ENCODE measurements at regions of chr11 and their contacts with region 1.

Region 1: GRCh38 chr11:33257897-33258630 is 883 bp downstream of the HIPK3 start:
- DNase-seq: peak; percentile 67 to 83 (median 76)
- ATAC-seq: peak; percentile 71
- H3K4me3 ChIP-seq: peak overlapping the region; percentile 63
- H3K4me3 Mint-ChIP-seq: peak overlapping the region; percentile 89 to 99 (median 96)
- H3K27ac ChIP-seq: peak overlapping the region; percentile 97
- H3K27ac Mint-ChIP-seq: peak overlapping the region; percentile 93 to 99 (median 98)
- H3K4me1 ChIP-seq: peaks cover 27 to 28% of the 10 kb centered on the region in 2 donors
- H3K4me1 Mint-ChIP-seq: peaks cover 25 to 55% (median 44%) of the 10 kb centered on the region in 7 donors
- H3K27me3 ChIP-seq: no peaks in the 10 kb centered on the region
- H3K27me3 Mint-ChIP-seq: peaks cover 0 to 2% (median 0%) of the 10 kb centered on the region in 5 donors

Region 2: GRCh38 chr11:32583459-32584271 is 674.4 kb before region 1 on chr11 and contains the start of gene EIF3M:
- CTCF ChIA-PET with region 1: no interaction called
- POLR2A ChIA-PET with region 1: no interaction called
- intact Hi-C with region 1: loop called (anchors 1 to 5 kb)
- DNase-seq: peak; percentile 90 to 95 (median 94)
- ATAC-seq: peak; percentile 100
- H3K4me3 ChIP-seq: peak within 1 kb of the TSS; percentile 87
- H3K4me3 Mint-ChIP-seq: peak within 1 kb of the TSS; percentile 93 to 99 (median 97)
- H3K27ac ChIP-seq: peak within 1 kb of the TSS; percentile 96
- H3K27ac Mint-ChIP-seq: peak within 1 kb of the TSS; percentile 94 to 99 (median 97)
- H3K4me1 ChIP-seq: peaks cover 27 to 28% of the 10 kb centered on the region in 2 donors
- H3K4me1 Mint-ChIP-seq: peaks cover 25 to 52% (median 44%) of the 10 kb centered on the region in 7 donors
- H3K27me3 ChIP-seq: no peaks in the 10 kb centered on the region
- H3K27me3 Mint-ChIP-seq: no peaks in the 10 kb centered on the region
- total RNA-seq, gene EIF3M: 210 to 250 (median 236) TPM

Region 3: DNA sequence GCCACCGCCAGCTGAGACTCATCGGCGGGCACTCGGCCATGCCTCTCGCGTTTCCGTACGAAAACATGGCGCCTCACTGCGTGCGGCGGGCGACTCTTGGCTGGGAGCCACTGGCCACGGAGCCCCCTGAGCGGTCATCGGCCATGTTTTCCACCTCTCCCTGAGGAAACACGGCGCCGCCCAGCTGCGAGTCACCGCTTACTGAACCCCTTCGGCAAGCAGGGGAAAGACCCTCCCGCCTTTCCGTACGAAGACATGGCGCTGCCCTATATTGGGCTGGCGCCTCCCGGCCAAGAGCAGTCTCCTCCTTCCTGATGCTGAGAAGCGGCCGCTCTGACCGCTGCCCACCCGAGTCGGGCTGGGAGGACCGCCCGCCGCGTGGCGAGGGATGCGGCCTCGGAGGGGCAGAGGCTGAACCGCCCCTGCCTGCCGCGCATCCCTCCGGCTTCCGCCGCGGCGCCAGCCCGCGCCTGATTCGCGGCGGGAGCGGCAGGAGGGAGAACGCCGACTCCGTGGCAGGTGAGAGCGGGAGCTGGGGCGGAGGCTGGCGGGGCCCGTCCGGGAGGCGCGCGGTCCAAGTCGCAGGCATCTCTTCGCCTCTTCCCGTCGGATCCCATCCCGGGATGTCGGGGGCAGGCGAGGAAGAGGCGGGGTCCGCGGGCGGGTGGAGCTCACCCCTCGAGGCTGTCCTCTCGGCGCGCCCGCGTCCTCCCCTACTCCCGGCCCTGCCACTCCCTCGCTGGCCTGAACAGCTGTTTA is 218.6 kb before region 1 on chr11 and contains the start of gene TCP11L1:
- CTCF ChIA-PET with region 1: no interaction called
- POLR2A ChIA-PET with region 1: interaction called, 3 read pairs
- intact Hi-C with region 1: loop called (anchors 2 to 5 kb)
- DNase-seq: peak; percentile 57 to 88 (median 76)
- ATAC-seq: peak; percentile 93
- H3K4me3 ChIP-seq: peak within 1 kb of the TSS; percentile 100
- H3K4me3 Mint-ChIP-seq: peak within 1 kb of the TSS; percentile 91 to 97 (median 94)
- H3K27ac ChIP-seq: peak within 1 kb of the TSS; percentile 82
- H3K27ac Mint-ChIP-seq: peak within 1 kb of the TSS; percentile 77 to 95 (median 92)
- H3K4me1 ChIP-seq: peaks cover 3 to 9% of the 10 kb centered on the region in 2 donors
- H3K4me1 Mint-ChIP-seq: peaks cover 0 to 17% (median 14%) of the 10 kb centered on the region in 7 donors
- H3K27me3 ChIP-seq: no peaks in the 10 kb centered on the region
- H3K27me3 Mint-ChIP-seq: peaks cover 0 to 17% (median 0%) of the 10 kb centered on the region in 5 donors
- total RNA-seq, gene TCP11L1: 9.1 to 17.1 (median 13.3) TPM

Region 4: DNA sequence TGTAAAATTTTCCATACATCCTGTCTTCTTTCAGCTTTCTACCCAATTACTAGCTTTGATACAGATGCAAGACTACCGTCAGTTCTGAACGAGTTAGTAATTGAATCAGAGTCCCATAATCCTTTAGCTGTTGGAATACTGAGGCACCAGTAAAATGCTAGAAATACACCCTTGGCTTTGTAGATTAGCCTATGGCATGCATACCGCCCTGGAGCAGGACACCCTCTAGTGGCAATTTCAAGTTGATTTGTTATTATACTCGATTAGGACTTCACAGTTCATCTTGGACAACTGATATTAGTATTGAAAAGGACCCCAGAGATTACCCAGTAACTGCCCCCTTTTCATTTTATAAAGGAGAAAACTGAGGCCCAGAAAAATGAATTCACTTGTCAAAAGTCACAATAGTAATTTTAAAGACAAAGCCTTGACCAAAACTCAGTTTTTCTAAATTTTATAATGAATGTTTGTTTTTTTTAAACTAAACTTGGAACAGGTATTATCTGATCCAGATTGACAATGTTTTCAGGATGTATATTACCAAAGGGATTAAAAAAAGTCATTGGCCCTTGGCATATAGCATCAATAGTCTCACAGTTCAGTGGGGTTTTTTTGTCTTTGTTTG is 71.8 kb after region 1 on chr11:
- CTCF ChIA-PET with region 1: interaction called, 3 read pairs
- POLR2A ChIA-PET with region 1: interaction called, 3 read pairs
- intact Hi-C with region 1: loop called (anchors 1 kb)
- DNase-seq: peak in 7 of 9 donors; percentile 20 to 59 (median 49)
- ATAC-seq: peak; percentile 82
- H3K4me3 ChIP-seq: no peak overlapping the region
- H3K4me3 Mint-ChIP-seq: no peak overlapping the region
- H3K27ac ChIP-seq: no peak overlapping the region
- H3K27ac Mint-ChIP-seq: peak overlapping the region in 2 of 9 donors; percentile 54 to 80
- H3K4me1 ChIP-seq: no peaks in the 10 kb centered on the region
- H3K4me1 Mint-ChIP-seq: peaks cover 2 to 45% (median 28%) of the 10 kb centered on the region in 7 donors
- H3K27me3 ChIP-seq: no peaks in the 10 kb centered on the region
- H3K27me3 Mint-ChIP-seq: no peaks in the 10 kb centered on the region

Region 5: GRCh38 chr11:33773987-33774735 is 516.1 kb after region 1 on chr11 and contains the start of gene FBXO3:
- CTCF ChIA-PET with region 1: no interaction called
- POLR2A ChIA-PET with region 1: no interaction called
- intact Hi-C with region 1: loop called (anchors 1 to 2 kb)
- DNase-seq: peak; percentile 71 to 91 (median 88)
- ATAC-seq: peak; percentile 98
- H3K4me3 ChIP-seq: peak within 1 kb of the TSS; percentile 91
- H3K4me3 Mint-ChIP-seq: peak within 1 kb of the TSS; percentile 93 to 99 (median 97)
- H3K27ac ChIP-seq: peak within 1 kb of the TSS; percentile 83
- H3K27ac Mint-ChIP-seq: peak within 1 kb of the TSS; percentile 93 to 98 (median 96)
- H3K4me1 ChIP-seq: peaks cover 20 to 23% of the 10 kb centered on the region in 2 donors
- H3K4me1 Mint-ChIP-seq: peaks cover 33 to 58% (median 45%) of the 10 kb centered on the region in 7 donors
- H3K27me3 ChIP-seq: no peaks in the 10 kb centered on the region
- H3K27me3 Mint-ChIP-seq: peaks cover 0 to 34% (median 7%) of the 10 kb centered on the region in 5 donors
- total RNA-seq, gene FBXO3: 22.6 to 55.7 (median 47.7) TPM

Measured in naive thymus-derived CD4-positive, alpha-beta T cell (primary cell).